GM12878 (cell line): ENCODE measurements at regions of chr17 and their contacts with region 1.

Region 1: GRCh38 chr17:32546031-32546444 is 59.2 kb downstream of the CDK5R1 start:
- DNase-seq: no peak
- ATAC-seq: no peak
- H3K4me3 ChIP-seq: no peak overlapping the region
- H3K27ac ChIP-seq: no peak overlapping the region
- H3K4me1 ChIP-seq: peaks cover 6% of the 10 kb centered on the region
- H3K27me3 ChIP-seq: no peaks in the 10 kb centered on the region
- CTCF ChIP-seq: no peak
- EP300 ChIP-seq: no peak
- POLR2A ChIP-seq: no peak
- RAD21 ChIP-seq: no peak

Region 2: DNA sequence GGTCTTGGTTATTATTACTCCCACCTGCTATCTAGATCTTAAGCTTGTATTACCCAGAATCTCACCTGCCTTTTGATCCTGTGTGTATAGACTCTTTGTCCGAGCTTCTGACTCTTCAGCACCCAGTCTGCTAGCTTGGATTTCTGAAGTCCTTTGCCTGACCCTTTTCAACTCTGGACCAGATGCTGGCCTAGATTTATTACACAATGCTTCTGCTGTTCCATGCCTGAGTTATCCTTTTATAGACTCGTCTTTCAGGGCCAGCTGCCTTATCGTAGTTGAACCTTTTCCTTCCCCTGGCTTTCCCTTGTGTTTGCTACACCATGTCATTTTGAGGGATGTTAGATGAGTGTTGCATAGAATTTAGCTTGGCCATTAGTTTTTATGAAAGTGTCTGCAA is 371.1 kb before region 1 on chr17:
- CTCF ChIA-PET with region 1: no interaction called
- POLR2A ChIA-PET with region 1: no interaction called
- RAD21 ChIA-PET with region 1: no interaction called
- SMC1A ChIA-PET with region 1: no interaction called
- in situ Hi-C with region 1: no loop called
- intact Hi-C with region 1: no loop called
- DNase-seq: no peak
- ATAC-seq: no peak
- H3K4me3 ChIP-seq: no peak overlapping the region
- H3K27ac ChIP-seq: no peak overlapping the region
- H3K4me1 ChIP-seq: no peaks in the 10 kb centered on the region
- H3K27me3 ChIP-seq: no peaks in the 10 kb centered on the region
- CTCF ChIP-seq: no peak
- EP300 ChIP-seq: no peak
- POLR2A ChIP-seq: no peak
- RAD21 ChIP-seq: no peak

Region 3: GRCh38 chr17:32525122-32525521 is 20.9 kb before region 1 on chr17:
- CTCF ChIA-PET with region 1: interaction called, 8 read pairs
- POLR2A ChIA-PET with region 1: interaction called, 8 read pairs
- RAD21 ChIA-PET with region 1: interaction called, 77 read pairs
- SMC1A ChIA-PET with region 1: interaction called, 101 read pairs
- in situ Hi-C with region 1: no loop called
- intact Hi-C with region 1: no loop called
- DNase-seq: no peak
- ATAC-seq: no peak
- H3K4me3 ChIP-seq: no peak overlapping the region
- H3K27ac ChIP-seq: peak overlapping the region; percentile 97
- H3K4me1 ChIP-seq: peaks cover 49% of the 10 kb centered on the region
- H3K27me3 ChIP-seq: no peaks in the 10 kb centered on the region
- CTCF ChIP-seq: no peak
- EP300 ChIP-seq: no peak
- POLR2A ChIP-seq: no peak
- RAD21 ChIP-seq: no peak